ENCODE measurements at regions of chrX and their contacts with region 1.

Region 1: GRCh38 chrX:129637217-129638109 is 17.3 kb downstream of the APLN start:
- DNase-seq: peak; percentile 54 to 85 (median 68)
- ATAC-seq: peak; percentile 77
- H3K4me3 ChIP-seq: no peak overlapping the region
- H3K4me3 Mint-ChIP-seq: no peak overlapping the region
- H3K27ac ChIP-seq: no peak overlapping the region
- H3K27ac Mint-ChIP-seq: no peak overlapping the region
- H3K4me1 ChIP-seq: peaks cover 7% of the 10 kb centered on the region
- H3K4me1 Mint-ChIP-seq: peaks cover 6% of the 10 kb centered on the region
- H3K27me3 ChIP-seq: no peaks in the 10 kb centered on the region
- H3K27me3 Mint-ChIP-seq: no peaks in the 10 kb centered on the region
- CTCF ChIP-seq: peak; percentile 74

Region 2: GRCh38 chrX:129726307-129727111 is 89.0 kb after region 1 on chrX:
- CTCF ChIA-PET with region 1: interaction called, 3 read pairs
- POLR2A ChIA-PET with region 1: no interaction called
- intact Hi-C with region 1: loop called in 1 of 2 experiments (anchors 5 kb)
- DNase-seq: peak in 11 of 14 experiments; percentile 1 to 51 (median 23)
- ATAC-seq: no peak
- H3K4me3 ChIP-seq: no peak overlapping the region
- H3K4me3 Mint-ChIP-seq: no peak overlapping the region
- H3K27ac ChIP-seq: no peak overlapping the region
- H3K27ac Mint-ChIP-seq: no peak overlapping the region
- H3K4me1 ChIP-seq: peaks cover 21% of the 10 kb centered on the region
- H3K4me1 Mint-ChIP-seq: peaks cover 63% of the 10 kb centered on the region
- H3K27me3 ChIP-seq: no peaks in the 10 kb centered on the region
- H3K27me3 Mint-ChIP-seq: no peaks in the 10 kb centered on the region
- CTCF ChIP-seq: peak; percentile 20

Region 3: GRCh38 chrX:129823115-129823514 is 185.7 kb after region 1 on chrX:
- CTCF ChIA-PET with region 1: interaction called, 4 read pairs
- POLR2A ChIA-PET with region 1: no interaction called
- intact Hi-C with region 1: loop called (anchors 1 kb)
- DNase-seq: peak; percentile 16 to 80 (median 43)
- ATAC-seq: peak; percentile 76
- H3K4me3 ChIP-seq: no peak overlapping the region
- H3K4me3 Mint-ChIP-seq: no peak overlapping the region
- H3K27ac ChIP-seq: no peak overlapping the region
- H3K27ac Mint-ChIP-seq: no peak overlapping the region
- H3K4me1 ChIP-seq: peaks cover 5% of the 10 kb centered on the region
- H3K4me1 Mint-ChIP-seq: peaks cover 18% of the 10 kb centered on the region
- H3K27me3 ChIP-seq: no peaks in the 10 kb centered on the region
- H3K27me3 Mint-ChIP-seq: no peaks in the 10 kb centered on the region
- CTCF ChIP-seq: peak; percentile 73

Region 4: GRCh38 chrX:129876771-129877305 is 239.4 kb after region 1 on chrX:
- CTCF ChIA-PET with region 1: no interaction called
- POLR2A ChIA-PET with region 1: no interaction called
- intact Hi-C with region 1: loop called in 1 of 2 experiments (anchors 5 kb)
- DNase-seq: no peak
- ATAC-seq: no peak
- H3K4me3 ChIP-seq: no peak overlapping the region
- H3K4me3 Mint-ChIP-seq: no peak overlapping the region
- H3K27ac ChIP-seq: no peak overlapping the region
- H3K27ac Mint-ChIP-seq: no peak overlapping the region
- H3K4me1 ChIP-seq: no peaks in the 10 kb centered on the region
- H3K4me1 Mint-ChIP-seq: no peaks in the 10 kb centered on the region
- H3K27me3 ChIP-seq: no peaks in the 10 kb centered on the region
- H3K27me3 Mint-ChIP-seq: no peaks in the 10 kb centered on the region
- CTCF ChIP-seq: no peak